Activated T-helper 2 cell treated with anti-CD3 and anti-CD28 coated beads, Interferon-gamma antibody, Interleukin-2, Interleukin-4, amounts not matched to agents 10 μg/mL and 5 μg/mL and 100 μg/mL, durations not matched to agents 14 hours and 24 hours and 36 hours (primary cell): ENCODE measurements at regions of chr20 and their contacts with region 1.

Region 1: DNA sequence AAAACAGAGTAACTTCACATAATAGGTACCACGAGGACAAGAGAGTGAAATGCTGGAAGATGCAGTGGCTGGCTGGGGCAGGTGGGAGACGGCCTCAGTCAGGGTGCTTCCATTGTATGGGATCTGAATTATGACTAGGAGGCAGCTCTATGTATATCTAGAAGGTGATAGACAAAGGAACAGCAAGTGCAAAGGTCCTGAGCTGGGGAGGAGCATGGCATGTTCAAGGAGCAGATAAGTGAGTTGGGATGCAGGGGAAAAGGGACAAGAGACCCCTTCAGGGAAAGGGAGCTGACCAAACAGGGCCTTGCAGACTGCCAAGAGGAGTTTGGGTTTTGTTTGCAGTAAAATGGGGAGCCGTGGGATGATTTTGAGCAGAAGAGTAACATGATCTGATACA is 8.3 kb upstream of the SLC9A8 start:
- DNase-seq: no peak
- H3K4me3 Mint-ChIP-seq: no peak overlapping the region
- H3K27ac Mint-ChIP-seq: peak overlapping the region; percentile 82
- H3K4me1 Mint-ChIP-seq: peaks cover 65% of the 10 kb centered on the region
- H3K27me3 Mint-ChIP-seq: no peaks in the 10 kb centered on the region

Region 2: GRCh38 chr20:49768204-49769047 is 35.9 kb before region 1 on chr20:
- intact Hi-C with region 1: loop called (anchors 2 kb)
- DNase-seq: peak; percentile 36
- H3K4me3 Mint-ChIP-seq: peak overlapping the region; percentile 30
- H3K27ac Mint-ChIP-seq: no peak overlapping the region
- H3K4me1 Mint-ChIP-seq: peaks cover 39% of the 10 kb centered on the region
- H3K27me3 Mint-ChIP-seq: peaks cover 20% of the 10 kb centered on the region